Spleen (tissue), 13 donors: ENCODE measurements at regions of chr19 and their contacts with region 1.

Region 1: GRCh38 chr19:45478454-45479238 is 10.8 kb downstream of the FOSB start:
- DNase-seq: peak; percentile 94
- H3K4me3 ChIP-seq: peak overlapping the region; percentile 32 to 69 (median 45)
- H3K27ac ChIP-seq: peak overlapping the region; percentile 92 to 99 (median 96)
- H3K4me1 ChIP-seq: peaks cover 4 to 43% (median 20%) of the 10 kb centered on the region in 6 donors
- H3K27me3 ChIP-seq: peaks cover 0 to 17% (median 8%) of the 10 kb centered on the region in 7 donors
- CTCF ChIP-seq: peak; percentile 90 to 99 (median 97)
- POLR2A ChIP-seq: peak in 2 of 3 donors; percentile 16 to 29

Region 2: DNA sequence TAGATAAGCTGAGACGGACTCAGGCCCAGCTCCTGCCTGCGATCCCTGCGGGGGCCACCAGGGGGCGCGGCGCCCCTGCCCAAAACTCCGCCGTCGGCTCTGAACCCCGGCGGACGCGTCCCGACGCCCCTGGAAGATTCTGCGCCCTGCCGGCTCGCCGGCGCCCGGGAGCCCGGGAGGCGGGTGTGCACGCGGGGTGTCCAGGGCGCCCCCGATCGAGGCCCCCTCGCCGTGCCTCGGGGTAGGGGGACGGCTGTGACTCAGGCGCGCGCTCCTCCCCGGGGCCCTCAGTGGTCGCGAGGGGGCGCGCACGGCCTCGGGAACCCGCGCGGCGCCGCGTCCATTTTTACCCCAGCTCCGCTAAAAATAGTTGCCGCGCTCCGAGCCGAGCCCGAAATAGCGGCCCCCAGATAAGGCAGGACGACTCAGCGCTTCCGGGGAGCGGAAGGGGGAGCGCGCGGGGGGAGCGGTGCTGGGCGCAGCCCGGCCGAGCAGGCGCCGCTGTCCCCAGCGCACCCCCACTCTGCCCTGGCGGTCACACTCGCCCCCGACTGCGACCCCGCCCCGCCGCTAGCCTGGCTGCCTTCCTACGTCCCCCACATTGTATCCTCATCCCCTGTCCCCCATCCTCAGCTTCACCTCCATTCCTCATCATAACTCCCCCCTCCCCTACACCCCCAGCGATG is 38.9 kb before region 1 on chr19:
- intact Hi-C with region 1: loop called (anchors 2 kb)
- DNase-seq: peak; percentile 96
- H3K4me3 ChIP-seq: peak overlapping the region; percentile 55 to 87 (median 66)
- H3K27ac ChIP-seq: peak overlapping the region; percentile 76 to 96 (median 92)
- H3K4me1 ChIP-seq: peaks cover 15 to 52% (median 45%) of the 10 kb centered on the region in 6 donors
- H3K27me3 ChIP-seq: no peaks in the 10 kb centered on the region
- CTCF ChIP-seq: peak; percentile 95 to 100 (median 98)
- POLR2A ChIP-seq: no peak

Region 3: DNA sequence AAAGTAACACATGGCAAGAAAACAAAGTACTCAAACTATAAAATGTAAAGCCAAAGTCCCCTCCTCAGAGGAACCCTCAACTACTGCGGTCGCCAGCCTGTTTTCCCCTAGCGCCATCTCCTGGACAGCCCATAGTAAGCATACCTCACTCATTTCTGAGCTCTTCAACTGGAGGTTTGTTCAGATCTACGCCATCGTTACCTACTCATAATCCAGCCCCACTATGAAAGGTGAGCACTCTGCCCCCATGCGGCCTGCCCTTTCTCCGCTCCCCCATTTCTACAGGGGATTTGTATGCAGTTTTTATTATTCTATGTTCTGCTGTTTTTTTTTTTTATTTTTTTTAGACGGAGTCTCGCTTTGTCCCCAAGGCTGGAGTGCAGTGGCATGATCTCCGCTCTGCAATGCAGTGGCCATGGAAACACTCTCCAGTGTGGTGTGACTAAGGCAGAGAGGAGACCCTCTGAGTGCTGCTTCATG is 79.8 kb after region 1 on chr19:
- intact Hi-C with region 1: no loop called
- DNase-seq: peak; percentile 86
- H3K4me3 ChIP-seq: no peak overlapping the region
- H3K27ac ChIP-seq: peak overlapping the region in 1 of 8 donors; percentile 23
- H3K4me1 ChIP-seq: peaks cover 0 to 56% (median 34%) of the 10 kb centered on the region in 6 donors
- H3K27me3 ChIP-seq: no peaks in the 10 kb centered on the region
- CTCF ChIP-seq: peak; percentile 53 to 86 (median 74)
- POLR2A ChIP-seq: no peak

Region 4: GRCh38 chr19:45577111-45577905 is 98.7 kb after region 1 on chr19:
- intact Hi-C with region 1: no loop called
- DNase-seq: no peak
- H3K4me3 ChIP-seq: no peak overlapping the region
- H3K27ac ChIP-seq: peak overlapping the region in 1 of 8 donors; percentile 6
- H3K4me1 ChIP-seq: peaks cover 0 to 42% (median 2%) of the 10 kb centered on the region in 6 donors
- H3K27me3 ChIP-seq: no peaks in the 10 kb centered on the region
- CTCF ChIP-seq: no peak
- POLR2A ChIP-seq: no peak

Region 5: GRCh38 chr19:45607071-45608029 is 128.7 kb after region 1 on chr19:
- intact Hi-C with region 1: no loop called
- DNase-seq: peak; percentile 84
- H3K4me3 ChIP-seq: peak overlapping the region in 4 of 8 donors; percentile 4 to 54 (median 8)
- H3K27ac ChIP-seq: peak overlapping the region in 5 of 8 donors; percentile 18 to 65 (median 46)
- H3K4me1 ChIP-seq: peaks cover 6 to 18% (median 13%) of the 10 kb centered on the region in 6 donors
- H3K27me3 ChIP-seq: peaks cover 0 to 21% (median 8%) of the 10 kb centered on the region in 7 donors
- CTCF ChIP-seq: peak; percentile 60 to 90 (median 84)
- POLR2A ChIP-seq: no peak